ENCODE measurements at regions of chr1 and their contacts with region 1.

Region 1: GRCh38 chr1:18556364-18556763 is 74.3 kb upstream of the PAX7 start:
- DNase-seq: peak in 1 of 2 experiments; percentile 7
- H3K4me3 ChIP-seq: no peak overlapping the region
- H3K4me3 Mint-ChIP-seq: no peak overlapping the region
- H3K27ac Mint-ChIP-seq: no peak overlapping the region
- H3K4me1 ChIP-seq: no peaks in the 10 kb centered on the region
- H3K4me1 Mint-ChIP-seq: no peaks in the 10 kb centered on the region
- H3K27me3 ChIP-seq: no peaks in the 10 kb centered on the region
- H3K27me3 Mint-ChIP-seq: peaks cover 33% of the 10 kb centered on the region
- CTCF ChIP-seq: peak in 1 of 2 experiments; percentile 46

Region 2: DNA sequence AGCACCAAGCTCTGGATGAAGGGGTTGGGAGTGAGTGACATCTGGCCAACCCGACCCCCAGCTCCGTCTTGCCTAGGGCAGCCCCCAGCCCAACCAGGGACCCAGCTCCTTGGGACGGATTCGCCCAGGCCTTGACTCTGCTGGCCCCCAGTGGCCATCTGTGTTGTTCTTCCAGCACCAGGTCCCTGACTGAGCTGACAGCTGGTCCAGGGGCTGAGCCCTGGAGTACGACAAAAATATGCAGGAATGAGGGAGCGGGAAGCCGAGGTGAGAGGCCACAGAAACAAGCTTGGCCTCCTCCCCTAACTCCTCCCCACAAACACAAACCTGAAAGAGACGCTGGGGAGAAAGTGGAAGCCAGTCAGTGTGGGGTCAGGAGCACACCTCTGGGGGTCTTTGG is 19.3 kb after region 1 on chr1:
- CTCF ChIA-PET with region 1: interaction called, 24 read pairs
- POLR2A ChIA-PET with region 1: no interaction called
- intact Hi-C with region 1: no loop called
- DNase-seq: peak; percentile 76 to 83
- H3K4me3 ChIP-seq: no peak overlapping the region
- H3K4me3 Mint-ChIP-seq: no peak overlapping the region
- H3K27ac Mint-ChIP-seq: no peak overlapping the region
- H3K4me1 ChIP-seq: no peaks in the 10 kb centered on the region
- H3K4me1 Mint-ChIP-seq: no peaks in the 10 kb centered on the region
- H3K27me3 ChIP-seq: no peaks in the 10 kb centered on the region; the same call in 1 of the 2 replicates
- H3K27me3 Mint-ChIP-seq: peaks cover 7% of the 10 kb centered on the region
- CTCF ChIP-seq: peak; percentile 82 to 86

Region 3: GRCh38 chr1:18608534-18608933 is 52.2 kb after region 1 on chr1:
- CTCF ChIA-PET with region 1: no interaction called
- POLR2A ChIA-PET with region 1: no interaction called
- intact Hi-C with region 1: no loop called
- DNase-seq: no peak
- H3K4me3 ChIP-seq: no peak overlapping the region
- H3K4me3 Mint-ChIP-seq: no peak overlapping the region
- H3K27ac Mint-ChIP-seq: no peak overlapping the region
- H3K4me1 ChIP-seq: no peaks in the 10 kb centered on the region
- H3K4me1 Mint-ChIP-seq: no peaks in the 10 kb centered on the region
- H3K27me3 ChIP-seq: no peaks in the 10 kb centered on the region; the same call in 1 of the 2 replicates
- H3K27me3 Mint-ChIP-seq: no peaks in the 10 kb centered on the region
- CTCF ChIP-seq: peak; percentile 9 to 15

Measured in Caco-2 (cell line).